ENCODE measurements at regions of chr22 and their contacts with region 1.

Region 1: DNA sequence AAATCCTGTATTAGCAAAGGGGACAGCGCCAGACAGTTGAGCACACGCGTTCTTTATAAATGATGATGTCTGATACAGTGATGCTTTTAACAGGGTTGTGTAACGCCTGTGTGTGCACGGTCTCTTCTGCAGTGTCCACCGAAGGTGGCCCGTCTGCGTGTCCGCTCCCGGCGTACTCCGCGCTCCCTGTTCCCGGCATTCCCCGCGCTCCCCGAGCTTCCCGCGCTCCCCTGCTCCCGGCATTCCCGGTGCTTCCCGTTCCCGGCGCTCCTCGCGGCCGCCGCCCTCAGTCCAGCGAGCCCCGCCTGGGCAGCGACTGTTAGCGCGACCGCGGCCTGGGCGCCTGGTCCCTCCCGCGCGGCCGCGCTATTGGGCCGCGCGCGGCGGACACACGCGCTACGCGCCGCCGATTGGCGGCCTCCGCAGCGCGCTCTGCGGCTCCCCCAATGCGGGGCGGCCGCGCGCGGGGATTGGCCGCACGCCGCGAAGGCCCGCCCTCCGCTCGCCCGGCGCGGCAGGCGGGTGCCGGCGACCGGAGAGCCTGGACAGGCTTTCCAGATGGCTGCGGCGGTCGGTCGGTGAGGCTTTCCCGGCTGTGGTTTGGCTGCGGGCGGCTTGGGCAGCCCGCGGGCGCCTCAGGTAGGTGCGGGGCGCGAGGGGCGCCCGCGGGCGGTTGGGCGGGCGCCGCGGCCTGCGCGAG is at the start of gene DGCR8:
- DNase-seq: peak; percentile 48 to 83 (median 75)
- ATAC-seq: peak; percentile 97
- H3K4me3 ChIP-seq: peak within 1 kb of the TSS; percentile 94
- H3K4me3 Mint-ChIP-seq: peak within 1 kb of the TSS; percentile 86 to 96 (median 90)
- H3K27ac ChIP-seq: peak within 1 kb of the TSS; percentile 74
- H3K27ac Mint-ChIP-seq: peak within 1 kb of the TSS; percentile 65 to 95 (median 81)
- H3K4me1 ChIP-seq: peaks cover 12 to 23% of the 10 kb centered on the region in 2 donors
- H3K4me1 Mint-ChIP-seq: peaks cover 29 to 45% (median 41%) of the 10 kb centered on the region in 7 donors
- H3K27me3 ChIP-seq: no peaks in the 10 kb centered on the region
- H3K27me3 Mint-ChIP-seq: no peaks in the 10 kb centered on the region
- total RNA-seq, gene DGCR8: 33.4 to 63.6 (median 41.1) TPM

Region 2: GRCh38 chr22:19995626-19996335 is 84.1 kb before region 1 on chr22:
- CTCF ChIA-PET with region 1: no interaction called
- POLR2A ChIA-PET with region 1: no interaction called
- intact Hi-C with region 1: no loop called
- DNase-seq: no peak
- ATAC-seq: no peak
- H3K4me3 ChIP-seq: no peak overlapping the region
- H3K4me3 Mint-ChIP-seq: no peak overlapping the region
- H3K27ac ChIP-seq: no peak overlapping the region
- H3K27ac Mint-ChIP-seq: no peak overlapping the region
- H3K4me1 ChIP-seq: no peaks in the 10 kb centered on the region
- H3K4me1 Mint-ChIP-seq: peaks cover 0 to 2% (median 0%) of the 10 kb centered on the region in 7 donors
- H3K27me3 ChIP-seq: no peaks in the 10 kb centered on the region
- H3K27me3 Mint-ChIP-seq: peaks cover 0 to 5% (median 0%) of the 10 kb centered on the region in 5 donors

Region 3: GRCh38 chr22:20102203-20102780 is 22.4 kb after region 1 on chr22:
- CTCF ChIA-PET with region 1: no interaction called
- POLR2A ChIA-PET with region 1: interaction called, 4 read pairs
- intact Hi-C with region 1: loop called (anchors 1 kb)
- DNase-seq: no peak
- ATAC-seq: no peak
- H3K4me3 ChIP-seq: no peak overlapping the region
- H3K4me3 Mint-ChIP-seq: peak overlapping the region in 2 of 10 donors; percentile 29 to 39
- H3K27ac ChIP-seq: no peak overlapping the region
- H3K27ac Mint-ChIP-seq: peak overlapping the region; percentile 59 to 97 (median 85)
- H3K4me1 ChIP-seq: peaks cover 24 to 29% of the 10 kb centered on the region in 2 donors
- H3K4me1 Mint-ChIP-seq: peaks cover 22 to 52% (median 46%) of the 10 kb centered on the region in 7 donors
- H3K27me3 ChIP-seq: no peaks in the 10 kb centered on the region
- H3K27me3 Mint-ChIP-seq: no peaks in the 10 kb centered on the region

Region 4: GRCh38 chr22:20130739-20131596 is 51.1 kb after region 1 on chr22:
- CTCF ChIA-PET with region 1: no interaction called
- POLR2A ChIA-PET with region 1: no interaction called
- intact Hi-C with region 1: loop called in 1 of 2 experiments (anchors 1 kb)
- DNase-seq: peak; percentile 65 to 77 (median 72)
- ATAC-seq: peak; percentile 88
- H3K4me3 ChIP-seq: peak overlapping the region; percentile 73
- H3K4me3 Mint-ChIP-seq: peak overlapping the region in 8 of 10 donors; percentile 17 to 75 (median 69)
- H3K27ac ChIP-seq: peak overlapping the region; percentile 91
- H3K27ac Mint-ChIP-seq: peak overlapping the region in 6 of 9 donors; percentile 36 to 82 (median 68)
- H3K4me1 ChIP-seq: peaks cover 14 to 20% of the 10 kb centered on the region in 2 donors
- H3K4me1 Mint-ChIP-seq: peaks cover 0 to 33% (median 23%) of the 10 kb centered on the region in 7 donors
- H3K27me3 ChIP-seq: no peaks in the 10 kb centered on the region
- H3K27me3 Mint-ChIP-seq: no peaks in the 10 kb centered on the region

Measured in naive thymus-derived CD4-positive, alpha-beta T cell (primary cell).